ENCODE measurements at regions of chr5 and their contacts with region 1.

Region 1: DNA sequence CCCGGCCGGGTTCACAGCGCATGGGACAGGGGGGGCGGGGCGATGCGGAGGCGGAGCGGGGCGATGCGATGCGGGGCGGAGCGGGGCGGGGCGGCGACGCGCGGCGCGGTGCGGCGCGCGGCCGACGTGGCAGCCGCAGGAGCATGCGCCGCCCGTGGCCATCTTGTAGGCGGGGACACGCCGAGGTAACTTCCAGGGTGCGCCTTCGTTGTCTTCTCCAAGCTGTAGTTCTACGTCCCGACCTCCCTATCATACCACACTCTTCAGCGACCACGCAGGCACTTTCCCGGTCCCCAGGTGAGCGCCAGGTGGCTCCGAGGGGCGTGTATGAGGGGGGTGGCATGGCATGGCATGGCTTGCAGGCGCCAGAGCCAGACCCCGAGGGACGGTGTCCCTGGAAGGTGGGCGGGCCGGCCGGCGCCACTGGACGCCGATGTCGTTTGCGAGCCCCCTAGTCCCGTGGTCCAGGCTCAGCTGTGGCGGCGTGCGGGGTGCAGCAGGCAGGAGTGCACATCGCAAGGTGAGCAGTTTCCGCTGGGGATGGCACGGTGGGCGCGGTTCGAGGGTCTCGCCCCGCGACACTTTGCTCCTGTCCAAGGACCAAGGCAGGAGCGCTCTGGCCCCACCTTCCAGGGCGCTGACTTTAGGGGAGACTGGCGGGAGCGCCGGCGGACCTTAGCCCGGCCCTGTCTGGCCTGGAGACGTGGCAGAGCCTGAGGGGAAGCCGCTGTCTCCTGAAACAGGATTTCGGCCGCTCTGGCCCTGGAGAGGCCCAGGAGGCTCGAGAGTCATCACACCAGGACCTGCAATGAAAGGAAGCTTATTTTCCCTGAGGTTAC is at the start of gene PRRC1:
- DNase-seq: peak; percentile 64 to 92 (median 76)
- ATAC-seq: peak; percentile 94
- H3K4me3 ChIP-seq: peak within 1 kb of the TSS; percentile 97
- H3K4me3 Mint-ChIP-seq: peak within 1 kb of the TSS; percentile 97
- H3K27ac ChIP-seq: peak within 1 kb of the TSS; percentile 68 to 76
- H3K27ac Mint-ChIP-seq: peak within 1 kb of the TSS; percentile 82
- H3K4me1 ChIP-seq: peaks cover 15% of the 10 kb centered on the region
- H3K4me1 Mint-ChIP-seq: peaks cover 44% of the 10 kb centered on the region
- H3K27me3 ChIP-seq: no peaks in the 10 kb centered on the region
- H3K27me3 Mint-ChIP-seq: peaks cover 6% of the 10 kb centered on the region
- CTCF ChIP-seq: no peak
- total RNA-seq, gene PRRC1: 32.0 to 33.8 TPM

Region 2: GRCh38 chr5:127549518-127549917 is 31.8 kb after region 1 on chr5:
- CTCF ChIA-PET with region 1: no interaction called
- POLR2A ChIA-PET with region 1: no interaction called
- intact Hi-C with region 1: no loop called
- DNase-seq: no peak
- ATAC-seq: no peak
- H3K4me3 ChIP-seq: no peak overlapping the region
- H3K4me3 Mint-ChIP-seq: no peak overlapping the region
- H3K27ac ChIP-seq: no peak overlapping the region
- H3K27ac Mint-ChIP-seq: no peak overlapping the region
- H3K4me1 ChIP-seq: no peaks in the 10 kb centered on the region
- H3K4me1 Mint-ChIP-seq: peaks cover 11% of the 10 kb centered on the region
- H3K27me3 ChIP-seq: no peaks in the 10 kb centered on the region
- H3K27me3 Mint-ChIP-seq: no peaks in the 10 kb centered on the region
- CTCF ChIP-seq: no peak

Region 3: GRCh38 chr5:128074171-128074570 is 556.5 kb after region 1 on chr5:
- CTCF ChIA-PET with region 1: no interaction called
- POLR2A ChIA-PET with region 1: no interaction called
- intact Hi-C with region 1: loop called in 1 of 2 experiments (anchors 5 kb)
- DNase-seq: no peak
- ATAC-seq: no peak
- H3K4me3 ChIP-seq: no peak overlapping the region
- H3K4me3 Mint-ChIP-seq: no peak overlapping the region
- H3K27ac ChIP-seq: no peak overlapping the region
- H3K27ac Mint-ChIP-seq: no peak overlapping the region
- H3K4me1 ChIP-seq: peaks cover 3% of the 10 kb centered on the region
- H3K4me1 Mint-ChIP-seq: peaks cover 22% of the 10 kb centered on the region
- H3K27me3 ChIP-seq: no peaks in the 10 kb centered on the region
- H3K27me3 Mint-ChIP-seq: no peaks in the 10 kb centered on the region
- CTCF ChIP-seq: no peak

Region 4: GRCh38 chr5:129094087-129094923 is 1576.6 kb after region 1 on chr5 and contains the start of gene ISOC1:
- CTCF ChIA-PET with region 1: no interaction called
- POLR2A ChIA-PET with region 1: no interaction called
- intact Hi-C with region 1: loop called in 1 of 2 experiments (anchors 5 kb)
- DNase-seq: peak; percentile 80 to 97 (median 90)
- ATAC-seq: peak; percentile 90
- H3K4me3 ChIP-seq: peak within 1 kb of the TSS; percentile 75
- H3K4me3 Mint-ChIP-seq: peak within 1 kb of the TSS; percentile 93
- H3K27ac ChIP-seq: peak within 1 kb of the TSS; percentile 42 to 66
- H3K27ac Mint-ChIP-seq: peak within 1 kb of the TSS; percentile 88
- H3K4me1 ChIP-seq: peaks cover 15% of the 10 kb centered on the region
- H3K4me1 Mint-ChIP-seq: peaks cover 46% of the 10 kb centered on the region
- H3K27me3 ChIP-seq: no peaks in the 10 kb centered on the region
- H3K27me3 Mint-ChIP-seq: peaks cover 6% of the 10 kb centered on the region
- CTCF ChIP-seq: no peak
- total RNA-seq, gene ISOC1: 6.6 to 7.1 TPM

Measured in CD4-positive, alpha-beta T cell (primary cell).